Left ventricle myocardium inferior (tissue), 1 donor: ENCODE measurements at regions of chr1 and their contacts with region 1.

Region 1: GRCh38 chr1:54070171-54070837 is 16.9 kb downstream of the TCEANC2 start:
- DNase-seq: no peak
- H3K4me3 ChIP-seq: no peak overlapping the region
- H3K27ac ChIP-seq: no peak overlapping the region
- H3K4me1 ChIP-seq: no peaks in the 10 kb centered on the region
- H3K27me3 ChIP-seq: no peaks in the 10 kb centered on the region
- CTCF ChIP-seq: peak; percentile 80

Region 2: DNA sequence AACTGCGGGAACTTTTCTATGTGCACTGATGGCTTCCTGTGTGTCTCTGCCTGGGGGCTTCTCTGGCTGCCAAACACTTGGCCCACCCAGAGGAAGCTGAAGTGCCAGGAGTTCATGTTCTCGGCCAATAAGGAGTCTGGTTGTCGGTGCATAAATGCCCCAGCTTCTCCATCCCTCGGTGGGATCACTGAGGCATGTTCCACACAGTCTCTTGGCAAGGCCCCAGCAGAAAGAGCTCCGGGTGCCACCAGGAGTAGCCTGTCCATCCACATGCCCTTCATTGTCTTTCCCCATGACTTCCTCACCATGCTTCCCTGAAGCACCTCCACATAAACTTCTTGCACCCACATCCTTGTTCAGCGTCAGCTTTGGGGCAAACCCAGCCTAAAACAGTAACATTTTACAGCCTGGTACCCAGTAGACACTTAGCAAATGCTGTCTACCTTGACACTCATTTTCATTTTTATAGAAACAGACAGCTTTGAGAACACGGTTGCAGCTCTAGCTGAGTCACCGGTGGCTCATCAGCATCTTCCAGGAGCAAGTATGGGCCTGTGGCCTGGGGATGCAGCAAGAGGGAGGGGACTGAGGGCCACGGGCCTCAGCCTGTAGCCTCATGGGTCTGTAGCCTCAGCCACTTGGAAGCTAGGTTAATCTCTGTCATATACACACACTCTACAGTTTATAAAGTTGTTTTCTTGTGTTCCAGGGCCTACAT is 97.3 kb after region 1 on chr1:
- intact Hi-C with region 1: no loop called
- DNase-seq: no peak
- H3K4me3 ChIP-seq: no peak overlapping the region
- H3K27ac ChIP-seq: no peak overlapping the region
- H3K4me1 ChIP-seq: no peaks in the 10 kb centered on the region
- H3K27me3 ChIP-seq: peaks cover 7% of the 10 kb centered on the region
- CTCF ChIP-seq: no peak

Region 3: GRCh38 chr1:54499360-54500106 is 429.2 kb after region 1 on chr1:
- intact Hi-C with region 1: loop called (anchors 10 kb)
- DNase-seq: no peak
- H3K4me3 ChIP-seq: peak overlapping the region; percentile 62
- H3K27ac ChIP-seq: no peak overlapping the region
- H3K4me1 ChIP-seq: peaks cover 12% of the 10 kb centered on the region
- H3K27me3 ChIP-seq: peaks cover 71% of the 10 kb centered on the region
- CTCF ChIP-seq: peak; percentile 48

Region 4: DNA sequence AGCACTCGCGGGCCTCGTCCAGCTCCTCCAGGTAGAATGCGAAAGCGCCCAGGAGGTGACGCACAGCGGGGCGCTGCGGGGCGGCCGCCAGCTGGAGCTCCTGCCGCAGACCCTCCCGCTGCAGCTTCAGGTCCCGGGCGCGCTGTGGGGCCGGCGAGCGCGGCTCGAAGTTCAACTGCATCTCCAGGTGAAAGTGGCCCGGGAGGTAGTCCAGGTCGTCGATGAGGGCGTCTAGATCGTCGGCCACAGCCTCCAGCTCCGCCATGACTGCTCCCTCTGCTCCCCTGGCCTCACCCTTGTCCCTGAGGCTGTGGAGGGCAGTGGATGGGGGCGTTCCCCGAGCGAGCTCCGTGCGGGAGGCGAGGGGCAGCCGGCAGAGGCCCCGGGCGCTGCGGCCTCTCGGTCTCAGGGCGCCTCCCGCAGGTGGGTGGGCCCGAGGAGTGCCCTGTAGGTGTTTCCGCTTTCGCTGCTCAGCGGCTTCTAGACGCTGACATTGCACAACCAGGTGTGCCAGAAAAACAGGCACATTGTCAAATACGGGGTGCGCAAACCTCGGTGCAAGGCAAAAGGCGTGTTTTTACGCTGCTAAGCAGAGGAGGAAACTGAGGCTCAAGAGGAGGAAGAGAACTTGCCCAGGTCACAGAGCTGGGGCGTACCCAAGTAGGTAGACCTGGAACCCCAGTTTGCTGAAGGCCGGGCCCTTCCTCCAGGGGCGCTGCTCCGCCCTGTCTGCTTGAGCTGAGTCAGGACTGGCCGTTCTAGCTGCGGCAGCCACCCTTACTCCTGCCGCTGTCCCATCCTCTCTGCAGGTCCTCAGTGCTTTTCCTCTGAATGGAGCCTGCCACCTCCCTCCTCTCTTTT is 730.8 kb after region 1 on chr1 and contains the start of gene TTC22:
- intact Hi-C with region 1: loop called (anchors 10 kb)
- DNase-seq: no peak
- H3K4me3 ChIP-seq: peak within 1 kb of the TSS; percentile 56
- H3K27ac ChIP-seq: no peak within 1 kb of the TSS
- H3K4me1 ChIP-seq: peaks cover 10% of the 10 kb centered on the region
- H3K27me3 ChIP-seq: peaks cover 82% of the 10 kb centered on the region
- CTCF ChIP-seq: peak; percentile 45
- total RNA-seq, gene TTC22: 0.14 TPM